Activated CD4-positive, alpha-beta memory T cell treated with anti-CD3 and anti-CD28 coated beads for 36 hours (primary cell): ENCODE measurements at regions of chr1 and their contacts with region 1.

Region 1: GRCh38 chr1:47333922-47334764 is 553 bp downstream of the CMPK1 start:
- DNase-seq: peak; percentile 79
- H3K4me3 Mint-ChIP-seq: no peak overlapping the region
- H3K27ac Mint-ChIP-seq: peak overlapping the region; percentile 95
- H3K4me1 Mint-ChIP-seq: peaks cover 21% of the 10 kb centered on the region
- H3K27me3 Mint-ChIP-seq: no peaks in the 10 kb centered on the region

Region 2: GRCh38 chr1:47192458-47193384 is 141.4 kb before region 1 on chr1:
- CTCF ChIA-PET with region 1: interaction called, 11 read pairs
- POLR2A ChIA-PET with region 1: no interaction called
- intact Hi-C with region 1: loop called (anchors 5 kb)
- DNase-seq: peak; percentile 78
- H3K4me3 Mint-ChIP-seq: no peak overlapping the region
- H3K27ac Mint-ChIP-seq: no peak overlapping the region
- H3K4me1 Mint-ChIP-seq: peaks cover 3% of the 10 kb centered on the region
- H3K27me3 Mint-ChIP-seq: peaks cover 5% of the 10 kb centered on the region

Region 3: GRCh38 chr1:47313915-47314664 is 20.1 kb before region 1 on chr1 and contains the start of gene STIL:
- CTCF ChIA-PET with region 1: interaction called, 11 read pairs
- POLR2A ChIA-PET with region 1: interaction called, 18 read pairs
- intact Hi-C with region 1: loop called (anchors 1 kb)
- DNase-seq: peak; percentile 99
- H3K4me3 Mint-ChIP-seq: peak within 1 kb of the TSS; percentile 83
- H3K27ac Mint-ChIP-seq: peak within 1 kb of the TSS; percentile 95
- H3K4me1 Mint-ChIP-seq: peaks cover 6% of the 10 kb centered on the region
- H3K27me3 Mint-ChIP-seq: no peaks in the 10 kb centered on the region
- total RNA-seq, gene STIL: 31.3 to 33.6 TPM

Region 4: DNA sequence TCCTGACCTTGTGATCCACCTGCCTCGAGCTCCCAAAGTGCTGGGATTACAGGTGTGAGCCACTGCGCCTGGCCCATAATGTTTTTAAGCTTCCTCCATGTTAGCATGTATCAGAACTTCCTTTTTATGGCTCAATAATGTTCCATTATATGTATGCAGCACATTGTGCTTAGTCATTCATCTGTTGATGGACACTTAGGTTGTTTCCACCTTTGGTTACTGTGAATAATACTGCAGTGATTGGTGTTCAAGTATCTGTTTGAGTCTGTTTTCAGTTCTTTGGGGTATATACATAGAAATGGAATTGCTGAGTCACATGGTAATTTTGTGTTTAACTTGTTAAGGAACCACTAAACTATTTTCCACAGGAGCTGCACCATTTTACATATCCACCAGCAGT is 17.2 kb after region 1 on chr1:
- CTCF ChIA-PET with region 1: interaction called, 6 read pairs
- POLR2A ChIA-PET with region 1: interaction called, 15 read pairs
- intact Hi-C with region 1: loop called (anchors 1 kb)
- DNase-seq: peak; percentile 20
- H3K4me3 Mint-ChIP-seq: no peak overlapping the region
- H3K27ac Mint-ChIP-seq: peak overlapping the region; percentile 88
- H3K4me1 Mint-ChIP-seq: peaks cover 31% of the 10 kb centered on the region
- H3K27me3 Mint-ChIP-seq: no peaks in the 10 kb centered on the region

Region 5: GRCh38 chr1:47361380-47361779 is 27.2 kb after region 1 on chr1:
- CTCF ChIA-PET with region 1: no interaction called
- POLR2A ChIA-PET with region 1: no interaction called
- intact Hi-C with region 1: no loop called
- DNase-seq: no peak
- H3K4me3 Mint-ChIP-seq: no peak overlapping the region
- H3K27ac Mint-ChIP-seq: no peak overlapping the region
- H3K4me1 Mint-ChIP-seq: peaks cover 5% of the 10 kb centered on the region
- H3K27me3 Mint-ChIP-seq: no peaks in the 10 kb centered on the region